ENCODE measurements at regions of chr7 and their contacts with region 1.

Region 1: DNA sequence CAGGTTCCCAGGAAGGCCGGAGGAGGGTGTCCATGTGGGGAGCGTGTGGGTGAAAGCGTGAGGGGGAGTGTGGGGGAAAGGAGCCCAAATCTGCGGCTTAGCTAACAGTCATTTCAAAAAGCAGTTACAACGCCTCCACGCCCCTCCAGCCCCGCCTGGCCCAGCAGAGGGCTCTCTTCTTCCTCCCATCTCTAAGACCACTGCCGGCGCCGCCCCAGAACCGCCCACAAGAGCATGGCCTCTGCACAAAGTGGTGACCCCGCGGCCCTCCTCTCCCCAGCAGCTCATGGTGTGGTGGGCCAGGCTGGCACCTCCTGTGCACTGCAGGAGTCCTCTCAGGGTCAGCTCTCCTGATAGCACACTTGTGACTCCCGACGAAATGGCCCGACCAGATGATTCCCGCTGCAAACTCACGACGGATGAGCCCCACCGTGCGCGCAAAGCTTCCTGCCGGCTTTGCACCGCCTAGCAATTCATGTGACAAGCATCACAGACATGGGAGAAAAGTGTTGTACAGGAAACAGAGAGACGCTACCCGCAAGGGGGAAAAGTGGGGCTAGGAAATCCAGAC is 12.4 kb upstream of the HUS1 start:
- DNase-seq: peak; percentile 88 to 90
- H3K4me3 ChIP-seq: peak overlapping the region; percentile 51
- H3K4me3 Mint-ChIP-seq: peak overlapping the region; percentile 85
- H3K27ac Mint-ChIP-seq: peak overlapping the region; percentile 68
- H3K4me1 ChIP-seq: peaks cover 23% of the 10 kb centered on the region
- H3K4me1 Mint-ChIP-seq: peaks cover 25% of the 10 kb centered on the region
- H3K27me3 ChIP-seq: no peaks in the 10 kb centered on the region
- H3K27me3 Mint-ChIP-seq: no peaks in the 10 kb centered on the region
- CTCF ChIP-seq: peak; percentile 72 to 82

Region 2: GRCh38 chr7:47979145-47979831 is 12.5 kb before region 1 on chr7 and contains the start of gene HUS1:
- CTCF ChIA-PET with region 1: no interaction called
- POLR2A ChIA-PET with region 1: no interaction called
- intact Hi-C with region 1: loop called (anchors 1 kb)
- DNase-seq: peak; percentile 93 to 94
- H3K4me3 ChIP-seq: peak within 1 kb of the TSS; percentile 87
- H3K4me3 Mint-ChIP-seq: peak within 1 kb of the TSS; percentile 81
- H3K27ac Mint-ChIP-seq: peak within 1 kb of the TSS; percentile 90
- H3K4me1 ChIP-seq: peaks cover 5% of the 10 kb centered on the region
- H3K4me1 Mint-ChIP-seq: peaks cover 18% of the 10 kb centered on the region
- H3K27me3 ChIP-seq: no peaks in the 10 kb centered on the region
- H3K27me3 Mint-ChIP-seq: no peaks in the 10 kb centered on the region
- CTCF ChIP-seq: no peak
- total RNA-seq, gene HUS1: 31.3 and 32.3 TPM in 2 replicates

Region 3: GRCh38 chr7:48035301-48035966 is 43.6 kb after region 1 on chr7 and contains the start of gene C7orf57:
- CTCF ChIA-PET with region 1: no interaction called
- POLR2A ChIA-PET with region 1: no interaction called
- intact Hi-C with region 1: loop called (anchors 2 kb)
- DNase-seq: peak; percentile 91 to 94
- H3K4me3 ChIP-seq: peak within 1 kb of the TSS; percentile 50
- H3K4me3 Mint-ChIP-seq: peak within 1 kb of the TSS; percentile 78
- H3K27ac Mint-ChIP-seq: peak within 1 kb of the TSS; percentile 84
- H3K4me1 ChIP-seq: peaks cover 5% of the 10 kb centered on the region
- H3K4me1 Mint-ChIP-seq: peaks cover 7% of the 10 kb centered on the region
- H3K27me3 ChIP-seq: peaks cover 5% of the 10 kb centered on the region
- H3K27me3 Mint-ChIP-seq: peaks cover 37% of the 10 kb centered on the region
- CTCF ChIP-seq: peak in 1 of 2 experiments; percentile 36
- total RNA-seq, gene C7orf57: not detected in 2 replicates

Region 4: GRCh38 chr7:48059706-48060105 is 67.9 kb after region 1 on chr7:
- CTCF ChIA-PET with region 1: no interaction called
- POLR2A ChIA-PET with region 1: no interaction called
- intact Hi-C with region 1: no loop called
- DNase-seq: no peak
- H3K4me3 ChIP-seq: no peak overlapping the region
- H3K4me3 Mint-ChIP-seq: no peak overlapping the region
- H3K27ac Mint-ChIP-seq: no peak overlapping the region
- H3K4me1 ChIP-seq: no peaks in the 10 kb centered on the region
- H3K4me1 Mint-ChIP-seq: no peaks in the 10 kb centered on the region
- H3K27me3 ChIP-seq: no peaks in the 10 kb centered on the region
- H3K27me3 Mint-ChIP-seq: peaks cover 8% of the 10 kb centered on the region
- CTCF ChIP-seq: no peak

Region 5: GRCh38 chr7:48154792-48155413 is 163.1 kb after region 1 on chr7:
- CTCF ChIA-PET with region 1: interaction called, 19 read pairs
- POLR2A ChIA-PET with region 1: no interaction called
- intact Hi-C with region 1: loop called (anchors 1 kb)
- DNase-seq: peak; percentile 48 to 70
- H3K4me3 ChIP-seq: no peak overlapping the region
- H3K4me3 Mint-ChIP-seq: no peak overlapping the region
- H3K27ac Mint-ChIP-seq: no peak overlapping the region
- H3K4me1 ChIP-seq: no peaks in the 10 kb centered on the region
- H3K4me1 Mint-ChIP-seq: peaks cover 6% of the 10 kb centered on the region
- H3K27me3 ChIP-seq: no peaks in the 10 kb centered on the region
- H3K27me3 Mint-ChIP-seq: peaks cover 17% of the 10 kb centered on the region
- CTCF ChIP-seq: peak; percentile 68 to 81

Measured in Caco-2 (cell line).